Activated T-helper 1 cell treated with anti-CD3 and anti-CD28 coated beads, Interleukin-12 subunit alpha, Interleukin-12 subunit beta, Interleukin-2, Interleukin-4 antibody, amounts not matched to agents 30 ng/mL and 10 ng/mL and 1 ng/mL, durations not matched to agents 14 hours and 24 hours and 36 hours (primary cell): ENCODE measurements at regions of chr9 and their contacts with region 1.

Region 1: GRCh38 chr9:91164724-91165520 is 196.8 kb downstream of the AUH start:
- DNase-seq: peak; percentile 74
- H3K4me3 Mint-ChIP-seq: peak overlapping the region; percentile 82
- H3K27ac Mint-ChIP-seq: peak overlapping the region; percentile 98
- H3K4me1 Mint-ChIP-seq: peaks cover 62% of the 10 kb centered on the region
- H3K27me3 Mint-ChIP-seq: no peaks in the 10 kb centered on the region

Region 2: DNA sequence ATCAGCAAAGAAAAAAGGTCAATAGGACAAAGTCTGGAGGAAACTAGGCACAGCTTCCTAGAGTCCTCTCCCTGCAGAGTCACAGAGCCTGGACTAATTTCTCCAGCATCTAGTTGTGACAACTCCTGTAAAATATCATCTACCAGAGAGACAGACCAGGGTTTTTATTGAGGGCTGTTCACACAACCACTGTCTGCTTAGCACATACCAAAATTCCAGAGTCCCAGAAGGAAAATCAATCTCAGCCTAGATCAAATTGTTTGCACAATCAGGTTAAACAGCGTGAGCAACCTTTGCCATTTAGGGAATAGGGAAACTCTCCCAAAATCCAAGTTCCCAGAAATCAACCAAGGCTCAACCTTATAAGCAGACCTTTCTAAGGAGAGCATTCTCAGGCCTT is 173.0 kb before region 1 on chr9:
- intact Hi-C with region 1: no loop called
- DNase-seq: no peak
- H3K4me3 Mint-ChIP-seq: no peak overlapping the region
- H3K27ac Mint-ChIP-seq: no peak overlapping the region
- H3K4me1 Mint-ChIP-seq: no peaks in the 10 kb centered on the region
- H3K27me3 Mint-ChIP-seq: peaks cover 13% of the 10 kb centered on the region

Region 3: GRCh38 chr9:91177661-91178280 is 12.8 kb after region 1 on chr9:
- intact Hi-C with region 1: loop called (anchors 1 kb)
- DNase-seq: no peak
- H3K4me3 Mint-ChIP-seq: peak overlapping the region; percentile 35
- H3K27ac Mint-ChIP-seq: peak overlapping the region; percentile 96
- H3K4me1 Mint-ChIP-seq: peaks cover 71% of the 10 kb centered on the region
- H3K27me3 Mint-ChIP-seq: no peaks in the 10 kb centered on the region